Activated naive CD4-positive, alpha-beta T cell treated with anti-CD3 and anti-CD28 coated beads for 36 hours (primary cell): ENCODE measurements at regions of chr14 and their contacts with region 1.

Region 1: DNA sequence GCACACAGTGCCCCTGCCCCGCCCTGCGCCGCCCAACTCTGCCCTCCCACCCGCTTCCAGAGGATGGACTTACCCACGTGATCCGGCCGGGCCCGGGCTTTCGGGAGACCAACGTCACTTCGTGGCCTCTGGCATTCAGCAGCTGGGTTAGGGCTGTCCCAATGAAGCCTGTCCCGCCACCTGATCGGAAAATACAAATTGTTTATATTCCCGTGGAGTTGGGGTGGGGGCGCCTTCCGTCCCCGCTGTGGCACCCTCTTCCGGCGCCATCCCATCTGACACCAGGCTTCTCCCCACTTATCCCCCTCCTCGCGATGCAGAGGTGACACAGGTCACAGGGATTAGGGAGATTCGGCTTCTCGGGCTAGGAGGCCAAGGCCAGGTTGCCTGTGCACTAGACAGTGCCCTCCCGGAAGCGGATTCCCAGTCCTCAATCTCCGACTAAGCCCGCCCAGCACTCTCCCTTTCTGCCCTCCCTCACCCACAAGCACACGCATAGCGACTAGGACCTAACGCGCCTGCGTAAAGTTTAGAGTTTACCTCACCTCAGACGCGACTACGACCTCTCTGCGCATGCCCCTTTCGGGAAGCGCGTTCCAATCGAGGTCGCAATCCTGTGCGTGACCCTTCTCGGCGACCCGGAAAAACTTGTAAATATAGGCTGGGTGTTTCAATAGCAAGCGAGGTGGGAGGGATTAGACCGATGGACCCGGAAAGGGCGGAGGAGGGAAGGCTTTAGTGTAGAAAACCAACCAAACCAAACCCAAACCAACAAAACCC is at the start of gene SDR39U1:
- DNase-seq: peak; percentile 99
- H3K4me3 Mint-ChIP-seq: peak within 1 kb of the TSS; percentile 89
- H3K27ac Mint-ChIP-seq: peak within 1 kb of the TSS; percentile 98
- H3K4me1 Mint-ChIP-seq: peaks cover 39% of the 10 kb centered on the region
- H3K27me3 Mint-ChIP-seq: no peaks in the 10 kb centered on the region
- total RNA-seq, gene SDR39U1: 70.5 to 72.4 TPM

Region 2: GRCh38 chr14:23469127-23469905 is 973.1 kb before region 1 on chr14 and contains the start of gene NGDN:
- CTCF ChIA-PET with region 1: no interaction called
- intact Hi-C with region 1: loop called (anchors 1 kb)
- DNase-seq: peak; percentile 96
- H3K4me3 Mint-ChIP-seq: no peak within 1 kb of the TSS
- H3K27ac Mint-ChIP-seq: no peak within 1 kb of the TSS
- H3K4me1 Mint-ChIP-seq: peaks cover 11% of the 10 kb centered on the region
- H3K27me3 Mint-ChIP-seq: no peaks in the 10 kb centered on the region
- total RNA-seq, gene NGDN: 38.9 to 40.8 TPM

Region 3: GRCh38 chr14:24093901-24094761 is 348.3 kb before region 1 on chr14 and contains the start of gene PCK2:
- CTCF ChIA-PET with region 1: no interaction called
- intact Hi-C with region 1: loop called (anchors 5 kb)
- DNase-seq: peak; percentile 94
- H3K4me3 Mint-ChIP-seq: peak within 1 kb of the TSS; percentile 99
- H3K27ac Mint-ChIP-seq: peak within 1 kb of the TSS; percentile 98
- H3K4me1 Mint-ChIP-seq: peaks cover 32% of the 10 kb centered on the region
- H3K27me3 Mint-ChIP-seq: no peaks in the 10 kb centered on the region
- total RNA-seq, gene PCK2: 117 TPM

Region 4: GRCh38 chr14:24188251-24189058 is 254.0 kb before region 1 on chr14 and contains the start of gene IPO4:
- CTCF ChIA-PET with region 1: no interaction called
- intact Hi-C with region 1: loop called (anchors 2 kb)
- DNase-seq: peak; percentile 97
- H3K4me3 Mint-ChIP-seq: peak within 1 kb of the TSS; percentile 85
- H3K27ac Mint-ChIP-seq: peak within 1 kb of the TSS; percentile 78
- H3K4me1 Mint-ChIP-seq: peaks cover 46% of the 10 kb centered on the region
- H3K27me3 Mint-ChIP-seq: no peaks in the 10 kb centered on the region
- total RNA-seq, gene IPO4: 64.2 to 74.5 TPM

Region 5: DNA sequence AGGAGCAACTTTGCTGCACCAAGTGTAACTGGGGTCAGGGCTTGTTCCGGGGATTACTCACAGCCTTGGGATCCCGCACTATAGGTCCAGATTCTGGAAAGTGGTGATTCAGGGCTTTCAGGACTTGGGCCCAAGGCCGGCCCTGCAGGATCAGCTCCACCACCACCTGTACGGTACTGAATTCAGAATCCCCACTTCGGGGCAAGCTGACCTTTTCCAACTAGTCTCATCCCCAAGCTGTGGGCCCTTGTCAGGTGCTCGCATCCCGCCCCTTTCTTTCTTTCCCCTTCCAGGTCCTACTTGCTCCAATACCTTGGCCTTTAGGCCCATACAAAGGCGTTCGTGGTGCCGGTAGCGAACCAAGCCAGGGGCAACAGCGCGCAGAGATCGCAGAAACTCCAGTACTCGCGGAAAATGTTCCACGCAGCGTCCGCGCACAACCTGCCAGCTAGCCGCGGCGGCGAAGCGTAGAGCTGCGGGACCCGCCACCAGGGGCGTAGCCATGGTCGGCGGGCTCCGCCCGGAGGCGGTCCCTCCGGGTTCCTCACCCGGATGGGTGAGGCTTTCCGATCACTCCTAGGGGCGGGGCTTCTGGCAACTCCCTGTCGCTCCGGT is 200.5 kb before region 1 on chr14:
- CTCF ChIA-PET with region 1: interaction called, 5 read pairs
- intact Hi-C with region 1: loop called (anchors 1 kb)
- DNase-seq: peak; percentile 94
- H3K4me3 Mint-ChIP-seq: peak overlapping the region; percentile 97
- H3K27ac Mint-ChIP-seq: peak overlapping the region; percentile 100
- H3K4me1 Mint-ChIP-seq: peaks cover 49% of the 10 kb centered on the region
- H3K27me3 Mint-ChIP-seq: no peaks in the 10 kb centered on the region

Region 6: GRCh38 chr14:24431569-24432258 is 10.7 kb before region 1 on chr14:
- CTCF ChIA-PET with region 1: interaction called, 63 read pairs
- intact Hi-C with region 1: loop called (anchors 1 kb)
- DNase-seq: peak; percentile 95
- H3K4me3 Mint-ChIP-seq: peak overlapping the region; percentile 95
- H3K27ac Mint-ChIP-seq: peak overlapping the region; percentile 97
- H3K4me1 Mint-ChIP-seq: peaks cover 39% of the 10 kb centered on the region
- H3K27me3 Mint-ChIP-seq: no peaks in the 10 kb centered on the region

Region 7: GRCh38 chr14:24556756-24557155 is 114.3 kb after region 1 on chr14:
- CTCF ChIA-PET with region 1: no interaction called
- intact Hi-C with region 1: no loop called
- DNase-seq: no peak
- H3K4me3 Mint-ChIP-seq: no peak overlapping the region
- H3K27ac Mint-ChIP-seq: no peak overlapping the region
- H3K4me1 Mint-ChIP-seq: no peaks in the 10 kb centered on the region
- H3K27me3 Mint-ChIP-seq: peaks cover 5% of the 10 kb centered on the region

Region 8: GRCh38 chr14:24673534-24674203 is 231.2 kb after region 1 on chr14:
- CTCF ChIA-PET with region 1: no interaction called
- intact Hi-C with region 1: loop called (anchors 1 kb)
- DNase-seq: peak; percentile 87
- H3K4me3 Mint-ChIP-seq: peak overlapping the region; percentile 60
- H3K27ac Mint-ChIP-seq: peak overlapping the region; percentile 96
- H3K4me1 Mint-ChIP-seq: peaks cover 80% of the 10 kb centered on the region
- H3K27me3 Mint-ChIP-seq: no peaks in the 10 kb centered on the region